A549 (cell line): ENCODE measurements at regions of chr9 and their contacts with region 1.

Region 1: GRCh38 chr9:4228606-4229005 is 71.3 kb downstream of the GLIS3 start:
- DNase-seq: peak in 1 of 2 experiments; percentile 60
- ATAC-seq: peak; percentile 94
- H3K4me3 ChIP-seq: no peak overlapping the region; the same call in 2 of the 3 replicates
- H3K27ac ChIP-seq: peak overlapping the region; percentile 74 to 84
- H3K4me1 ChIP-seq: peaks cover 82% of the 10 kb centered on the region
- CTCF ChIP-seq: peak; percentile 80
- EP300 ChIP-seq: no peak
- POLR2A ChIP-seq: no peak
- RAD21 ChIP-seq: peak; percentile 83 to 88

Region 2: DNA sequence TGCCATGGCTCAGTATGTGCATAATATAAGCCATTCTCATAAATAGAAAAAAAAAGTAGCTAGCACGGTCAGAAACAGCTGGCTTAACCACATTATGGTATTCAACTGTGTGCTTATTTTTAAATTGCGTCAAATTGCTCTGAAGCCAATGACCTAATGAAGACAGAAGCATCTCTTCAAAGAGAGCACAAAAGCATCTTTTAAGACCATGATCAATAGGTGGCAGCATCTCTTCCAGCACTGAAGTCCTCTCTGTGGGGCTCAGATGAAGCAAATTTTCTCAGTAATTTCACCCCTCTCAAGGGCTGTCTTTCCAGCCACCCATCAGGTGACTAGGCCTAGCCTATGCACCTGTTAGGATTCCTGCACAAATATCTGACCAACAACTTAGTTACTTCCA is 180.2 kb before region 1 on chr9:
- CTCF ChIA-PET with region 1: interaction called, 11 read pairs
- POLR2A ChIA-PET with region 1: no interaction called
- DNase-seq: peak; percentile 10 to 39
- ATAC-seq: peak; percentile 34 to 74; a peak in 2 of 6 replicates
- H3K4me3 ChIP-seq: no peak overlapping the region
- H3K27ac ChIP-seq: peak overlapping the region in 1 of 2 experiments; percentile 27; a peak in 1 of 6 replicates
- H3K4me1 ChIP-seq: peaks cover 6% of the 10 kb centered on the region; the same call in 1 of the 3 replicates
- CTCF ChIP-seq: peak; percentile 47
- EP300 ChIP-seq: no peak
- POLR2A ChIP-seq: no peak
- RAD21 ChIP-seq: peak; percentile 49 to 56; a peak in 4 of 5 replicates

Region 3: GRCh38 chr9:4077499-4078102 is 151.0 kb before region 1 on chr9:
- CTCF ChIA-PET with region 1: interaction called, 27 read pairs
- POLR2A ChIA-PET with region 1: no interaction called
- DNase-seq: peak; percentile 56 to 76
- ATAC-seq: peak; percentile 87 to 93
- H3K4me3 ChIP-seq: no peak overlapping the region
- H3K27ac ChIP-seq: peak overlapping the region; percentile 19 to 47
- H3K4me1 ChIP-seq: peaks cover 33% of the 10 kb centered on the region
- CTCF ChIP-seq: peak; percentile 63
- EP300 ChIP-seq: no peak
- POLR2A ChIP-seq: no peak
- RAD21 ChIP-seq: peak; percentile 78 to 83

Region 4: GRCh38 chr9:4214486-4214885 is 14.1 kb before region 1 on chr9:
- CTCF ChIA-PET with region 1: interaction called, 44 read pairs
- POLR2A ChIA-PET with region 1: interaction called, 4 read pairs
- DNase-seq: no peak
- ATAC-seq: no peak
- H3K4me3 ChIP-seq: no peak overlapping the region
- H3K27ac ChIP-seq: peak overlapping the region in 1 of 2 experiments; percentile 22; a peak in 1 of 6 replicates
- H3K4me1 ChIP-seq: peaks cover 28% of the 10 kb centered on the region
- CTCF ChIP-seq: no peak
- EP300 ChIP-seq: no peak
- POLR2A ChIP-seq: no peak
- RAD21 ChIP-seq: no peak

Region 5: DNA sequence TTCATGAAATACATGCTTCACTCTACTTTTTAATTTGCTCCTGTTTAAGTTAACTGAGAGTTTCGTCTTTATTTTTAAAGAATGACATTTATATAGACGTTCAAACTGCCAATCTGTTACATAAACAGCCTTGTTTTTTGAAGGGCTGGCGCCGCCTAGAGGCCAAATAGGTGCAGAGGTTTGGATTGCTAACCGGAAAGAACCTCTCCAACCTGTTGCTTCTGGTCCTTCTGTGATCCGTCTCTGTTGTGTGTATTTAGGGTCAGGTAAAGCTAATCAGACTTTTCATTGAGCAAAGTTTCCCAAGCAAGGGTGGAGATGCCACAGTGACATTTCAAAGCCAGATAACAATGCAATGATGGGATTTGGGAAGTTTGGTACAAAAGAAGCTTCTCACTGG is 110.8 kb after region 1 on chr9:
- CTCF ChIA-PET with region 1: interaction called, 17 read pairs
- POLR2A ChIA-PET with region 1: no interaction called
- DNase-seq: peak; percentile 84 to 88
- ATAC-seq: peak; percentile 82 to 87
- H3K4me3 ChIP-seq: 0 out of 3 replicates have a peak overlapping the region, but pooled peaks have one; percentile 20
- H3K27ac ChIP-seq: peak overlapping the region; percentile 62 to 77
- H3K4me1 ChIP-seq: peaks cover 7% of the 10 kb centered on the region
- CTCF ChIP-seq: peak; percentile 97
- EP300 ChIP-seq: no peak
- POLR2A ChIP-seq: no peak
- RAD21 ChIP-seq: peak; percentile 92

Region 6: GRCh38 chr9:4463824-4464223 is 235.2 kb after region 1 on chr9:
- CTCF ChIA-PET with region 1: no interaction called
- POLR2A ChIA-PET with region 1: no interaction called
- DNase-seq: no peak
- ATAC-seq: no peak
- H3K4me3 ChIP-seq: no peak overlapping the region
- H3K27ac ChIP-seq: no peak overlapping the region
- H3K4me1 ChIP-seq: no peaks in the 10 kb centered on the region
- CTCF ChIP-seq: no peak
- EP300 ChIP-seq: no peak
- POLR2A ChIP-seq: no peak
- RAD21 ChIP-seq: no peak

Region 7: GRCh38 chr9:4689687-4690104 is 461.1 kb after region 1 on chr9:
- CTCF ChIA-PET with region 1: no interaction called
- POLR2A ChIA-PET with region 1: no interaction called
- DNase-seq: no peak
- ATAC-seq: no peak
- H3K4me3 ChIP-seq: no peak overlapping the region
- H3K27ac ChIP-seq: no peak overlapping the region
- H3K4me1 ChIP-seq: no peaks in the 10 kb centered on the region
- CTCF ChIP-seq: no peak
- EP300 ChIP-seq: no peak
- POLR2A ChIP-seq: no peak
- RAD21 ChIP-seq: no peak